ENCODE measurements at regions of chr10 and their contacts with region 1.

Region 1: GRCh38 chr10:89591111-89591795 is 53.8 kb downstream of the PANK1 start:
- DNase-seq: peak; percentile 60
- ATAC-seq: peak; percentile 75

Region 2: DNA sequence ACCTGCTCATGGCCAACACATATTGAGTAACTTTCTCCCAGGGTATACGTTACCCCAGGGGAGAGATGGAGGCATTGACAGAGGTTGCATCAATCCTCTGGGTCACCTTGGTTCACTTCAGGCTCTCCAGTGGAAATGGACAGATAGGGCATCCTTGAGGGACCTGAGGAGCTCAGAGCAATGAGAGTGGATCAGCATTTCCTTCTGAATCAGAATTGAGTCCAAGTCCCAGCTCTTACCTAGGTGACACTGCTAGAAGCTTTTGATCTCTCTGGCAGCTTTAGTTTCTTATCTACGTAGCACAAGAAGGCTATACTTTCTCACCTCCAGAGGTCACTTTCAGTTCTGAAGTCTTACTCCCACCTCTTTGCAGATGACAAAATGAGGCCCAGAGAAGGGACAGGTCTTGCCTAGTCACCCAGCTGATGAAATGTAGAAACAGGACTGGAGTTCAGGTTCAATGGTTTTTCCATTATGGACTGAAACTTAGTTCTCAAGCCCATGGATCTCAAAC is 18.6 kb after region 1 on chr10:
- intact Hi-C with region 1: no loop called
- DNase-seq: no peak
- ATAC-seq: no peak

Region 3: GRCh38 chr10:89643431-89644331 is 52.4 kb after region 1 on chr10:
- intact Hi-C with region 1: loop called (anchors 2 kb)
- DNase-seq: peak; percentile 77
- ATAC-seq: peak; percentile 80

Region 4: GRCh38 chr10:89981891-89982290 is 390.6 kb after region 1 on chr10:
- intact Hi-C with region 1: no loop called
- DNase-seq: no peak
- ATAC-seq: no peak